Activated CD4-positive, alpha-beta T cell treated with anti-CD3 and anti-CD28 coated beads for 36 hours (primary cell): ENCODE measurements at regions of chr6 and their contacts with region 1.

Region 1: DNA sequence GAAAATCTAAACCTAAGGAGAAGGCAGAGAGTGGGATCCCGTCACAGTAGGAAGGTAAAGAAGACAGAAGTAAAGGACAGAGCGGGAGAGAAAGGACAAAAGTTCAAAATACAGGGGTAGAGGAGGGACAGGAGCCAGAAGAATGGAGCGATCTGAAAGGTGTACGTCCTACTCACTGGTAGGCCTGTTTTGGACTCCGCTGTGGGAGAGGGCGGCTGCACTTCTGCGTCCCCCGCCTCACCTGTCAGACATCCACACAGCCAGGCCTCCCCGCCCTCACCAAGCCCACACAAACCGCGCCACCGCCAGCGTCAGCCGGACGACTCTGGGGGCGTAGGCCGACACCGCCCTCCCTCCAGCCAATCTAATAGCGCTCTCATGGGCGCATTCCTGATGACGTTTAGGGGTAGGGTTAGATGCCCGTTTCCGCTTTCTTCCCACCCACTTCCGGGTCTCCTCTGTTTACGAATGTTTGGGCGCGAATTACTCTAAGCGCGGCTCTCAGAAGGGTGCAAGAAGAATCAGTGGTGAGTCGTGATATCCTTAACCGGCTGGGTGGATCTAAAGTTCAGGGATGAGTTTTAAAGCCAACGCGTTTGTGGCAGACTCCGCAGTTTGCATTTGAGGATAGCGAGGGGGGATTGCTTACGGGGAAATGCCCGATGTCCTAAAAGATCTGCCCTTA is at the starts of genes CENPQ and MMUT:
- DNase-seq: peak; percentile 94
- ATAC-seq: peak; percentile 95
- H3K4me3 Mint-ChIP-seq: peak within 1 kb of the TSS; percentile 97
- H3K27ac Mint-ChIP-seq: peak within 1 kb of the TSS; percentile 96
- H3K4me1 Mint-ChIP-seq: peaks cover 34% of the 10 kb centered on the region
- H3K27me3 Mint-ChIP-seq: no peaks in the 10 kb centered on the region
- total RNA-seq, gene CENPQ: 14.1 to 16.6 TPM
- total RNA-seq, gene MMUT: 10.5 to 14.8 TPM

Region 2: DNA sequence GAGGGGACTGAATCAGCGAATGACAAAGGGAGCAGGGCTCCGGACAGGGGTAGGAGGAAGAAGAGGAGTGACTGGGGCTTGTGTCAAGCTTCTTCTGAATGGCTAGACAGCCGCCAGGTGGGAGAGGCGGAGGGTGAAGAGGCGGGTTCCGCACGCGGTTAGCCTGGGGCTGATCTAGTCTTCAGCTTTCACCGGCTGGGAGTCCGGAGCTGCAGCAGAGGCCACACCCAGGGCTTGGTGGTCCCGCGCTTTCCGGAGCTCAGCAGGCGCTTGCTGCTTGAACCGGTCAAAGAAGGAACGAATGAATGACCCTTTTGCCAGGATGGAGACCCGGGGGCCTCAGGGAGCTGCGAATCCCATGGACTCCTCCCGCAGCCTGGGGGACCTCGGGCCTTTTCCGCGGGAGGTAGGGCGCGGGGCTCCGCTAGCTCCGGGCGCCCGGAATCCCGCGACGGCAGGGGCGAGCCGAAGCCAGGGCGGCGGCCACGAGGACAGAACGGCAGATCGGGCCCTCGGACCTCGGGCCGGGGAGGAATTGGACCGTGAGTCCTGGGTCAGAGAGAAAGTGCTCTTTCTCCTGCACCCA is 87.5 kb after region 1 on chr6 and contains the start of gene C6orf141:
- CTCF ChIA-PET with region 1: no interaction called
- POLR2A ChIA-PET with region 1: interaction called, 4 read pairs
- intact Hi-C with region 1: loop called in 1 of 2 experiments (anchors 2 kb)
- DNase-seq: peak; percentile 62
- ATAC-seq: peak; percentile 73
- H3K4me3 Mint-ChIP-seq: peak within 1 kb of the TSS; percentile 67
- H3K27ac Mint-ChIP-seq: no peak within 1 kb of the TSS
- H3K4me1 Mint-ChIP-seq: peaks cover 19% of the 10 kb centered on the region
- H3K27me3 Mint-ChIP-seq: peaks cover 27% of the 10 kb centered on the region
- total RNA-seq, gene C6orf141: 1.1 TPM

Region 3: GRCh38 chr6:49866485-49866943 is 403.4 kb after region 1 on chr6 and contains the start of gene CRISP1:
- CTCF ChIA-PET with region 1: no interaction called
- POLR2A ChIA-PET with region 1: no interaction called
- intact Hi-C with region 1: no loop called
- DNase-seq: no peak
- ATAC-seq: no peak
- H3K4me3 Mint-ChIP-seq: no peak within 1 kb of the TSS
- H3K27ac Mint-ChIP-seq: no peak within 1 kb of the TSS
- H3K4me1 Mint-ChIP-seq: no peaks in the 10 kb centered on the region
- H3K27me3 Mint-ChIP-seq: no peaks in the 10 kb centered on the region
- total RNA-seq, gene CRISP1: not detected